ENCODE measurements at regions of chr5 and their contacts with region 1.

Region 1: GRCh38 chr5:57298295-57298984 is 124.6 kb downstream of the GPBP1 start:
- DNase-seq: peak in 1 of 2 donors; percentile 91
- H3K4me3 ChIP-seq: peak overlapping the region; percentile 28 to 48
- H3K27ac ChIP-seq: no peak overlapping the region
- H3K4me1 ChIP-seq: peaks cover 4% of the 10 kb centered on the region in 2 donors
- H3K27me3 ChIP-seq: no peaks in the 10 kb centered on the region
- CTCF ChIP-seq: peak; percentile 57 to 82 (median 79)

Region 2: GRCh38 chr5:57316798-57317327 is 18.4 kb after region 1 on chr5:
- intact Hi-C with region 1: no loop called
- DNase-seq: no peak
- H3K4me3 ChIP-seq: no peak overlapping the region
- H3K27ac ChIP-seq: peak overlapping the region in 1 of 2 donors; percentile 3
- H3K4me1 ChIP-seq: no peaks in the 10 kb centered on the region
- H3K27me3 ChIP-seq: no peaks in the 10 kb centered on the region
- CTCF ChIP-seq: no peak

Region 3: GRCh38 chr5:57366744-57367143 is 68.3 kb after region 1 on chr5:
- intact Hi-C with region 1: no loop called
- DNase-seq: no peak
- H3K4me3 ChIP-seq: no peak overlapping the region
- H3K27ac ChIP-seq: no peak overlapping the region
- H3K4me1 ChIP-seq: no peaks in the 10 kb centered on the region
- H3K27me3 ChIP-seq: no peaks in the 10 kb centered on the region
- CTCF ChIP-seq: no peak

Region 4: GRCh38 chr5:57499262-57500050 is 201.0 kb after region 1 on chr5:
- intact Hi-C with region 1: loop called (anchors 5 kb)
- DNase-seq: no peak
- H3K4me3 ChIP-seq: peak overlapping the region in 1 of 2 donors; percentile 26
- H3K27ac ChIP-seq: peak overlapping the region in 1 of 2 donors; percentile 11
- H3K4me1 ChIP-seq: peaks cover 9 to 32% of the 10 kb centered on the region in 2 donors
- H3K27me3 ChIP-seq: no peaks in the 10 kb centered on the region
- CTCF ChIP-seq: peak in 2 of 3 experiments; percentile 38 to 63

Region 5: GRCh38 chr5:57698769-57699168 is 400.3 kb after region 1 on chr5:
- intact Hi-C with region 1: loop called (anchors 5 kb)
- DNase-seq: no peak
- H3K4me3 ChIP-seq: no peak overlapping the region
- H3K27ac ChIP-seq: no peak overlapping the region
- H3K4me1 ChIP-seq: peaks cover 3 to 23% of the 10 kb centered on the region in 2 donors
- H3K27me3 ChIP-seq: no peaks in the 10 kb centered on the region
- CTCF ChIP-seq: no peak

Region 6: GRCh38 chr5:57779383-57780223 is 481.2 kb after region 1 on chr5:
- intact Hi-C with region 1: loop called (anchors 2 kb)
- DNase-seq: no peak
- H3K4me3 ChIP-seq: peak overlapping the region in 1 of 2 donors; percentile 35
- H3K27ac ChIP-seq: peak overlapping the region in 1 of 2 donors; percentile 11
- H3K4me1 ChIP-seq: peaks cover 6% of the 10 kb centered on the region in 2 donors
- H3K27me3 ChIP-seq: no peaks in the 10 kb centered on the region
- CTCF ChIP-seq: peak; percentile 35 to 62 (median 50)

Region 7: DNA sequence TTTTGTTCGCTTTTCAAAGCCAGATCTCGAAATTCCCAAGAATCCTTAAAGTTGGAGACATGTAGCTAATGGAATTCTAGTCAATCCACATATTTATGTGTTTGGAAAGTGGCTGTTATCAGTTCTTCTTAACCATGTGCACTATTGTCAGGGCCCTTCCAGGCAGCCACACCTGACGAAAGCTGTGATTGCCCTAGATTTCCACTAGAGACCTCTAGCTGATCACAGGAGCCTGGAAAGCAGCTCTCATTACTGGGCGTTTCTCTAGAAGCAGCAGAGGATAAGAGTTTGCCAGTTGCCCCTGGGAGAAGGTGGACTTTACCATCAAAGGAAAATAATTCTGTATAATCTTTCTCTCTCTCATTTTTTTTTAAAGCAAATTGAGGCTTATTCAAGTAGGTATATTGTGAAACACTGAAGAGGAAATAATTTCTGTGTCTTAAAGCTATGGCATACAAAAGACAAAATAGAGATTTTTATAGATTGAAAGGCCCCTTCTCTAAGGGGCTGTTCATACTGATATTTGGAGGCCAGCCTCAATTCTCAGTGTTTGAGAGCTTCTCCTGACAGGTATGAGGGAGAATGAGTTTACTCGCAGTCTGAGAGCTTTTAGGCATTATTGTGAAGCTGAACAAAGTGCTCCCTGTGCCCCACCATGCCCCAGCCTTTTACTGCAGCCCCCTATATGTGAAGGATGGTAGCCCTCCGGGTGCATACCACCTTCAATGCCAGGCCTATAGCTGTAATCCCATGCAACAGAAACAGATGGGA is 589.6 kb after region 1 on chr5:
- intact Hi-C with region 1: loop called (anchors 2 kb)
- DNase-seq: peak in 1 of 2 donors; percentile 65
- H3K4me3 ChIP-seq: no peak overlapping the region
- H3K27ac ChIP-seq: no peak overlapping the region
- H3K4me1 ChIP-seq: no peaks in the 10 kb centered on the region
- H3K27me3 ChIP-seq: no peaks in the 10 kb centered on the region
- CTCF ChIP-seq: peak; percentile 35 to 75 (median 61)

Region 8: GRCh38 chr5:58224661-58225060 is 926.2 kb after region 1 on chr5:
- intact Hi-C with region 1: loop called (anchors 10 kb)
- DNase-seq: no peak
- H3K4me3 ChIP-seq: peak overlapping the region in 1 of 2 donors; percentile 41
- H3K27ac ChIP-seq: peak overlapping the region; percentile 88
- H3K4me1 ChIP-seq: peaks cover 0 to 26% of the 10 kb centered on the region in 2 donors
- H3K27me3 ChIP-seq: no peaks in the 10 kb centered on the region
- CTCF ChIP-seq: no peak

Measured in ascending aorta (tissue), 2 donors.